Activated CD8-positive, alpha-beta T cell treated with anti-CD3 and anti-CD28 coated beads, Interleukin-2, amount 10 ng/mL, durations not matched to agents 7 days and 5 days (primary cell): ENCODE measurements at regions of chr22 and their contacts with region 1.

Region 1: DNA sequence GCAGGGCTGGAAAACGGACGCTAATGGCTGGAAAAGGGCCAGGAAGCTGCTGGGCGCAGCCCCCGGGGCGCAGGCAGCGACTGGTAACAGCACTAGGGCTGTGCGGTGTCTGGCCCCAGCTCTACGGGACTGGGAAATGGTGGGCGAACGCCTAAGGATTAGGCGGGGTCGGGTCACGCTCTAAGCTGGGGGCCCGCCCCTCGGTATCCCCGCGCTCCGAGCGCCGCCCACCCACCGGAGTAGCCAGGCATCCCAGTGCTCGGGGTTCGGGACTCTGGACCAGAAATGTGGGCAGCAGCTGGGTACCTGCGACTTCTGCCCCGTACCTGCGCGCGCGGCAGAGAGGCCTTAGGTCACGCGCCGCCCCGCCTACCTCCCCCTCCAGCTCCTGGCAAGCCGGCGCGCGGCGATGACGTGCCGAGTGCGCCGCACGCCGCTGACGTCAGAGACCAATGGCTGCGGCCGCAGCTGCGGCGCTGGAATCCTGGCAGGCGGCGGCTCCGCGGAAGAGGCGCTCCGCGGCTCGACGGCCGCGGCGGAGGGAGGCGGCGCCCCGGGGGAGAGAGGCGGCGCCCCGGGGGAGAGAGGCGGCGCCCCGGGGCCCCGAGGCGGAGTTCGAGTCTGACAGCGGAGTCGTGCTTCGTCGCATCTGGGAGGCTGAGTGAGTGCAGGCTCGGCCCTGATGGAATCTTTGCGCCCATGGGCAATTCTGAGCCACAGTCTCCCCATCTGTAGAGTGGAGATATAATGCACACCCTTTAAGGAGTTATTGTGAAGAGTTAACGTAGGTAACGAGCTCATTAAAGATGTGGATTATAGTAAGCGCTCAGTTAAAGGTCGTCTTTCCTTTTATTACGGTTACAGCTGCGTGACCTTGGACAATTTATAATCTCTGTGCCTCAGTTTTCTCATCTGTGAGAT is at the starts of genes HPS4 and SRRD:
- DNase-seq: peak; percentile 93
- ATAC-seq: peak; percentile 81
- H3K4me3 Mint-ChIP-seq: peak within 1 kb of the TSS; percentile 86
- H3K27ac Mint-ChIP-seq: peak within 1 kb of the TSS; percentile 94
- H3K4me1 Mint-ChIP-seq: peaks cover 68% of the 10 kb centered on the region
- H3K27me3 Mint-ChIP-seq: no peaks in the 10 kb centered on the region
- total RNA-seq, gene HPS4: 32.2 to 34.6 TPM
- total RNA-seq, gene SRRD: 21.6 to 22.6 TPM

Region 2: DNA sequence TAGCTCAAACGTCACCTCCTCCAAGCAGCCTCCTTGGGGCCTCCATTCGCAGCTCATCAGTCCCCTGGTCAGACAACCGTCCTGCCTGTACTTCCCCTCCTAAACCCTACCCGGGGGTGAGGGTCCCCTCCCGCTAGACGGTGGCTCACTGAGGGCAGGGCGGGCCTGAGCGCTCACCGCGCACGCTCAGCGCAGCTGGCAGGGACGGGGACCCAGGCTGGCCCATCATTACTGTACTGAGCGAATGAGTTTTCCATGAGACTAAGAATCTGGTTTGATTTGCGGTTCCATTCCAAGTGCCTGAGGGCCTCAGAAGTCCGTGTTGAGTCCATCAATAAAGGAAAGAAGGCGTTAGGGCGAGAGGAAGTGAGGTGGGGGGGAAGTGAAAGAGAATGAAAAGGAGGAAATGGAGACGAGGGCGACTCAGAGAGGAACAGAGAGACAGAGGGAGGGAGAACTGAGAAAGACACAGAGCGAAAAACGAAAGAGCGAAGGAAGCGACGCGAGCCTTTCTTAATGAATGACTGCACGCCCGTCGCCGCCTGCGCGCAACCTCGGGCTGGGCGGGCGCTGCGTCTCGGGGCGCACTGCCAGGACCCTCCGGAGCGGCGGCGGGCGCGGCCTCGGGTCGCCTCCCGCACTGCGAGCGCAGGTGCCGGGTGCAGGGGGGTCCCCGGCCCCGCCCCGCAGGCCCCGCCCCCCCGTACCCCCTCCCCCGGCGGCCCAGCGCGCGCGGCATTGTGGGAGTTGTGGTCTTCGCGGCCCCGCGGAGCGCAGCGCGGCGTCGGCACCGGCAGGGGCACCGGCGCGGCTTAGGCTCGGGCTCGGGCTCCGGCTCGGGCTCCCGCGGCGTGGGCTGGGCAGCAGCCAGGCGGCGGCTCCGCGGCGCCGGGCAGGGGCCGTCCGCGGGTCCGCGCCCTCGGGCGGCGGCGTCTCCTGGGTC is 54.9 kb before region 1 on chr22 and contains the start of gene ASPHD2:
- CTCF ChIA-PET with region 1: interaction called, 8 read pairs
- POLR2A ChIA-PET with region 1: interaction called, 25 read pairs
- DNase-seq: peak; percentile 83
- ATAC-seq: peak; percentile 90
- H3K4me3 Mint-ChIP-seq: peak within 1 kb of the TSS; percentile 94
- H3K27ac Mint-ChIP-seq: peak within 1 kb of the TSS; percentile 99
- H3K4me1 Mint-ChIP-seq: peaks cover 51% of the 10 kb centered on the region
- H3K27me3 Mint-ChIP-seq: peaks cover 15% of the 10 kb centered on the region
- total RNA-seq, gene ASPHD2: 9.2 to 10.0 TPM

Region 3: GRCh38 chr22:26665813-26666231 is 182.1 kb after region 1 on chr22:
- CTCF ChIA-PET with region 1: interaction called, 29 read pairs
- POLR2A ChIA-PET with region 1: interaction called, 37 read pairs
- DNase-seq: no peak
- ATAC-seq: peak; percentile 18
- H3K4me3 Mint-ChIP-seq: no peak overlapping the region
- H3K27ac Mint-ChIP-seq: peak overlapping the region; percentile 88
- H3K4me1 Mint-ChIP-seq: peaks cover 52% of the 10 kb centered on the region
- H3K27me3 Mint-ChIP-seq: no peaks in the 10 kb centered on the region

Region 4: GRCh38 chr22:26672590-26673468 is 189.1 kb after region 1 on chr22:
- CTCF ChIA-PET with region 1: interaction called, 12 read pairs
- POLR2A ChIA-PET with region 1: interaction called, 37 read pairs
- DNase-seq: peak; percentile 97
- ATAC-seq: peak; percentile 68
- H3K4me3 Mint-ChIP-seq: peak overlapping the region; percentile 97
- H3K27ac Mint-ChIP-seq: peak overlapping the region; percentile 98
- H3K4me1 Mint-ChIP-seq: peaks cover 70% of the 10 kb centered on the region
- H3K27me3 Mint-ChIP-seq: no peaks in the 10 kb centered on the region